Activated CD4-positive, alpha-beta T cell treated with anti-CD3 and anti-CD28 coated beads for 36 hours (primary cell): ENCODE measurements at regions of chr6 and their contacts with region 1.

Region 1: GRCh38 chr6:87393022-87393622 is 14.7 kb upstream of the CFAP206 start:
- DNase-seq: peak; percentile 30
- ATAC-seq: peak; percentile 77
- H3K4me3 Mint-ChIP-seq: no peak overlapping the region
- H3K27ac Mint-ChIP-seq: no peak overlapping the region
- H3K4me1 Mint-ChIP-seq: no peaks in the 10 kb centered on the region
- H3K27me3 Mint-ChIP-seq: no peaks in the 10 kb centered on the region

Region 2: GRCh38 chr6:87139236-87139635 is 253.9 kb before region 1 on chr6:
- CTCF ChIA-PET with region 1: interaction called, 8 read pairs
- POLR2A ChIA-PET with region 1: no interaction called
- intact Hi-C with region 1: loop called (anchors 1 to 10 kb)
- DNase-seq: peak; percentile 43
- ATAC-seq: peak; percentile 70
- H3K4me3 Mint-ChIP-seq: no peak overlapping the region
- H3K27ac Mint-ChIP-seq: no peak overlapping the region
- H3K4me1 Mint-ChIP-seq: peaks cover 2% of the 10 kb centered on the region
- H3K27me3 Mint-ChIP-seq: peaks cover 7% of the 10 kb centered on the region

Region 3: DNA sequence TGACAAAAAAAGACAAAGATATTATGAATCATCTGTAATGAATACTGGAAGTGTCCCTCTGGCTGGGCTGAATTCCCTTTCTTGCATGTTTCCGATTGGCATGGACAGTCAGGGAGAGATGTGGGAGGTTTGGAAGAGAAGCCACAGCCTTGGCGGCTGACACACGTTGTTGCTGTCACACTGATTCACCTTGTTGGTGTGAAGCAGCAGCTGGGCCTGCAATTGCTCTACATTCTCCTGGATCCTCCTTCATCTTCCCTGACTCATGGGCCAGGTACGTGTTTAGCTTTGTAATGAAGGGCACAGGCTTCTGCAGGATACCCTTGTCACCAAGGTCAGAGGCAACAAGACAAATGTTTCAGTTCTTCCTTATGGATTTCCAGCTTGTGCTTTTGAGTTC is 84.2 kb before region 1 on chr6:
- CTCF ChIA-PET with region 1: no interaction called
- POLR2A ChIA-PET with region 1: no interaction called
- intact Hi-C with region 1: no loop called
- DNase-seq: no peak
- ATAC-seq: no peak
- H3K4me3 Mint-ChIP-seq: no peak overlapping the region
- H3K27ac Mint-ChIP-seq: no peak overlapping the region
- H3K4me1 Mint-ChIP-seq: no peaks in the 10 kb centered on the region
- H3K27me3 Mint-ChIP-seq: peaks cover 9% of the 10 kb centered on the region

Region 4: GRCh38 chr6:87419266-87419665 is 26.1 kb after region 1 on chr6:
- CTCF ChIA-PET with region 1: interaction called, 10 read pairs
- POLR2A ChIA-PET with region 1: no interaction called
- intact Hi-C with region 1: no loop called
- DNase-seq: no peak
- ATAC-seq: no peak
- H3K4me3 Mint-ChIP-seq: no peak overlapping the region
- H3K27ac Mint-ChIP-seq: no peak overlapping the region
- H3K4me1 Mint-ChIP-seq: no peaks in the 10 kb centered on the region
- H3K27me3 Mint-ChIP-seq: peaks cover 2% of the 10 kb centered on the region

Region 5: GRCh38 chr6:88238065-88238464 is 844.9 kb after region 1 on chr6:
- CTCF ChIA-PET with region 1: no interaction called
- POLR2A ChIA-PET with region 1: no interaction called
- intact Hi-C with region 1: loop called in 1 of 2 experiments (anchors 5 kb)
- DNase-seq: peak; percentile 17
- ATAC-seq: no peak
- H3K4me3 Mint-ChIP-seq: no peak overlapping the region
- H3K27ac Mint-ChIP-seq: no peak overlapping the region
- H3K4me1 Mint-ChIP-seq: no peaks in the 10 kb centered on the region
- H3K27me3 Mint-ChIP-seq: peaks cover 2% of the 10 kb centered on the region

Region 6: GRCh38 chr6:88870717-88871330 is 1477.7 kb after region 1 on chr6:
- CTCF ChIA-PET with region 1: no interaction called
- POLR2A ChIA-PET with region 1: no interaction called
- intact Hi-C with region 1: loop called in 1 of 2 experiments (anchors 2 kb)
- DNase-seq: peak; percentile 44
- ATAC-seq: no peak
- H3K4me3 Mint-ChIP-seq: no peak overlapping the region
- H3K27ac Mint-ChIP-seq: no peak overlapping the region
- H3K4me1 Mint-ChIP-seq: peaks cover 28% of the 10 kb centered on the region
- H3K27me3 Mint-ChIP-seq: no peaks in the 10 kb centered on the region